Pancreas (tissue), 10 donors: ENCODE measurements at regions of chr1 and their contacts with region 1.

Region 1: DNA sequence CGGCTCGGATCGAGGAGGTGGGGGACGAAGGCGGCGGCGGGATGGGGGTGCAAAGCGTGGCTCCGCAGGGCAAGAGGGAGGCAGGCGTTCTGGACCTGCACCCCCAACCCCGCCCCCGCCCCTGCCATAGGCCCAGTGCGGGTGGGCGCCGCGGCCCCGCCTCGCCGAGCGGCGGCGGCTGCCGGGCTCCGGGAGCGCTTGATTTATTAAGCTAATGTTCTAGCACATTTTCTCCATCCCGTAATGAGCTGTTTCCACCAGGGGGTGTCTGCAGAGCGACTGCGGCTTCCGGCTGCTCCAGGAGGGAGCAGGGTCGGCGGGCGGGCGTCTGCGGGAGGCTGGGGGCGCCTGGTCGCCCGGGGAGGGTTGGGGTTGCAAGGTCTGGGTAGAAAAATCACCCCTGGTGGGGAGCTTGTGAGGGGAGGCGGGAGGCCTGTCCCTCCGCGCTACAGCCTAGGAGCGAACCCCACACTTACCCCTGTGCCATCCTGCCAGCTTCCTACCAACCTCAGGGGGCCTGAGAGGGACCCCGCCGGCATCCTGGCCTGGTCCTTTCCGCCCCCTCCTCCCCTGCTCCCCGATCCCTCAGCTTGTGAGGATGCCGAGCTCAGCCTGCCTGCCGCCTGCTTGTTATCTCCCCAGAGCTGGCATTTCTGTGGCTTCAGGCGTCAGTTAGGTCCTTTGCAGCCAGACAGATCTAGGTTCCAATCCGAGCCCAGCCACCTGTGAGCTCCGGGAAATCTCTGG is 48.5 kb upstream of the ACOT11 start:
- DNase-seq: peak in 4 of 6 donors; percentile 39 to 71 (median 57)
- ATAC-seq: peak; percentile 66 to 94 (median 88)
- H3K4me3 ChIP-seq: peak overlapping the region; percentile 14 to 53 (median 30)
- H3K27ac ChIP-seq: no peak overlapping the region
- H3K4me1 ChIP-seq: no peaks in the 10 kb centered on the region
- H3K27me3 ChIP-seq: no peaks in the 10 kb centered on the region
- CTCF ChIP-seq: peak in 3 of 4 donors; percentile 22 to 24 (median 23)

Region 2: DNA sequence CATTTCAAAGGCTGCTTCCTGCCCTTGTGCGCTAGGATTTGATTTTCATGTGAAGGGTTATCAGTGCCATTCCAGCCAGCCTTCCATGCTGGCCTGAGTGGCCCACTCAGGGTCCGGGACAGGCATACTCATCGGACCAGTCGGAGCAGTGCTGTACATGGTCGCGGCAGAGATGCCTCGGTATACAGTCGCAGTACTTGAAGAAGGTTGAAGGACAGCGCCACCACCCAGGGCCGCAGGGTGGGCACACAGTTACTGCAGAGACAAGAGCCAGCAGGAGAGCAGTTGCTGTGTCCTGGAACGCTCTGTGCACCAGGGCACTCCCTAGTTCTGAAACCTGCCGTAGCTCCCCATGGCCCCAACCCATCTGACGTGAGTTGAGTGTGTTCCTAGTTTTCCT is 490.7 kb before region 1 on chr1:
- intact Hi-C with region 1: no loop called
- DNase-seq: no peak
- ATAC-seq: no peak
- H3K4me3 ChIP-seq: no peak overlapping the region
- H3K27ac ChIP-seq: no peak overlapping the region
- H3K4me1 ChIP-seq: no peaks in the 10 kb centered on the region
- H3K27me3 ChIP-seq: no peaks in the 10 kb centered on the region
- CTCF ChIP-seq: no peak

Region 3: GRCh38 chr1:54070171-54070837 is 429.2 kb before region 1 on chr1:
- intact Hi-C with region 1: loop called in 1 of 3 experiments (anchors 10 kb)
- DNase-seq: no peak
- ATAC-seq: peak; percentile 63 to 99 (median 92)
- H3K4me3 ChIP-seq: no peak overlapping the region
- H3K27ac ChIP-seq: no peak overlapping the region
- H3K4me1 ChIP-seq: no peaks in the 10 kb centered on the region
- H3K27me3 ChIP-seq: no peaks in the 10 kb centered on the region
- CTCF ChIP-seq: peak; percentile 11 to 51 (median 42)

Region 4: GRCh38 chr1:54121482-54122134 is 377.9 kb before region 1 on chr1:
- intact Hi-C with region 1: loop called (anchors 5 to 10 kb)
- DNase-seq: peak; percentile 76 to 94 (median 85)
- ATAC-seq: peak; percentile 55 to 88 (median 78)
- H3K4me3 ChIP-seq: peak overlapping the region in 2 of 4 donors; percentile 10 to 33
- H3K27ac ChIP-seq: peak overlapping the region in 2 of 4 donors; percentile 39 to 44
- H3K4me1 ChIP-seq: peaks cover 4 to 33% (median 11%) of the 10 kb centered on the region in 3 donors
- H3K27me3 ChIP-seq: no peaks in the 10 kb centered on the region
- CTCF ChIP-seq: peak; percentile 62 to 83 (median 67)

Region 5: DNA sequence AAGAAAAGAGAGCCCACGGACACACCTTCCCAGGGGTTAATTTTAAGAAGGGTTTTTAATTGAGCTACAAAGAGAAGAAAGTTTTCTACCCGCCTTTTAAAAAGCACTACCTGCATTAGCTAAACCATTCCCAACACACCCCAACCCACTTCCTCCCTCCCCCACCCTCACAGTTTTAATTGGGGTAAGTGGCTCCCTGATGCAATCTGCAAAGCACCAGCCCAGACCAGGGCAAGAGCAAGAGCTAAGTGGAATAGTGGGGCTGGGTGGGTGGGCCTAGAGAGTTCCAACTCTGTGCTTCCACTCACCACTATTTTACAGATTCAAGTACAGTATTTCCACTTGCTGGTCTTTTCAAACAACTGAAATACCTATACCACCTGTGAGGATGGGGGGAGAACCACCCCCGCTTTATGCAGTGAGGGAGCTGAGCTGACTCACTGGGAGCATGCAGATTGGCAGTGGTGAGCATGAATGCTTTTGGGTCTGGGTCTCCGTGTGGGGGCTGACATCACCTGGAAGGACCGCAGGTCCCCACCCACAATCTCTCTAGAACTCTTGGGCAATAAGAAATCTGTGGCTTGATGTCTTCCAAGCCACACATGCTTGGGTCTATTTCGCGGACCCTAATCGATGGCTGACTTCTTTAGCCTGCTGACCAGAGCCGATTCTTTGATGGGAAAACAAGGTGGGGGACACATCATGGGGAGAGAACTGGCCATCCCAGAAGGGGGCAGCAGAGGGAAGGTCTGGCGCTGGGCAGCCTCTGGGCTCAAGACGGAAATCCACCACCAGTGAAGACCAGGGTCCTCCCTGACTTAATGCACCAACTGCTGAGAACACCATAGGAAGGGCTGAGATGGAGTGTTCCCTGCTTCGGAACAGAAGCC is 188.8 kb before region 1 on chr1:
- intact Hi-C with region 1: loop called in 1 of 3 experiments (anchors 10 kb)
- DNase-seq: peak in 4 of 6 donors; percentile 41 to 73 (median 49)
- ATAC-seq: peak in 3 of 4 donors; percentile 66 to 74 (median 68)
- H3K4me3 ChIP-seq: no peak overlapping the region
- H3K27ac ChIP-seq: no peak overlapping the region
- H3K4me1 ChIP-seq: peaks cover 0 to 11% (median 10%) of the 10 kb centered on the region in 3 donors
- H3K27me3 ChIP-seq: no peaks in the 10 kb centered on the region
- CTCF ChIP-seq: peak; percentile 11 to 41 (median 20)

Region 6: DNA sequence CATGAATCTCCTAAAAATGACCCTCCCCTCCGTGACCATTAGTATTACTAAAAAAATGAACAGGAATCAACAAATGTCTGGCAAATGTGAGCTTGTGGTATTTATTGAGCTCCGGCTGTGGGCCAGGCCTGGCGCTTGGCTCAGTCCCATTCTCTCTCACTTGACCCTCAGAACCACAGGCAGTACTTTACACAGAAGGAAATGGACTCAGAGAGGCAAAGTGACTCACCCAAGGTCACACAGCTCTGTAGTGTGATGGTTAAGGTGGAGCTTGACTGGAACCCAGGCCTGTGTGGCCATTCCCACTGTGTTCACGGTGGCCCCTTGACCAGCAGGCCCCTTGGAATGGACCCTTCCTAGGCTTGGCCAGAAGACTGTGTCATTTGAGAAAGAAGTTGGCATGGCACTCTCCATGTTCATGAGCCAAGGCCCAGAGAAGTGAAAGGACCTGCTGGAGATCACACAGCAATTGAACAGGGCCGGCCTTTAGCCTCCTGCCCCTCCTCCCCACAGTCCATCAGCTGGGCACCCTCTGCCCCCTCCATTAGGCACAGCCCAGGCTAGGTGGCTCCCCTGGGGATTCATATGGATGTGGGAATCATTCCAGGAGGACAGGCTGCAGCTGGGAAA is 91.7 kb after region 1 on chr1:
- intact Hi-C with region 1: no loop called
- DNase-seq: peak in 1 of 6 donors; percentile 22
- ATAC-seq: no peak
- H3K4me3 ChIP-seq: no peak overlapping the region
- H3K27ac ChIP-seq: no peak overlapping the region
- H3K4me1 ChIP-seq: no peaks in the 10 kb centered on the region
- H3K27me3 ChIP-seq: no peaks in the 10 kb centered on the region
- CTCF ChIP-seq: no peak

Region 7: DNA sequence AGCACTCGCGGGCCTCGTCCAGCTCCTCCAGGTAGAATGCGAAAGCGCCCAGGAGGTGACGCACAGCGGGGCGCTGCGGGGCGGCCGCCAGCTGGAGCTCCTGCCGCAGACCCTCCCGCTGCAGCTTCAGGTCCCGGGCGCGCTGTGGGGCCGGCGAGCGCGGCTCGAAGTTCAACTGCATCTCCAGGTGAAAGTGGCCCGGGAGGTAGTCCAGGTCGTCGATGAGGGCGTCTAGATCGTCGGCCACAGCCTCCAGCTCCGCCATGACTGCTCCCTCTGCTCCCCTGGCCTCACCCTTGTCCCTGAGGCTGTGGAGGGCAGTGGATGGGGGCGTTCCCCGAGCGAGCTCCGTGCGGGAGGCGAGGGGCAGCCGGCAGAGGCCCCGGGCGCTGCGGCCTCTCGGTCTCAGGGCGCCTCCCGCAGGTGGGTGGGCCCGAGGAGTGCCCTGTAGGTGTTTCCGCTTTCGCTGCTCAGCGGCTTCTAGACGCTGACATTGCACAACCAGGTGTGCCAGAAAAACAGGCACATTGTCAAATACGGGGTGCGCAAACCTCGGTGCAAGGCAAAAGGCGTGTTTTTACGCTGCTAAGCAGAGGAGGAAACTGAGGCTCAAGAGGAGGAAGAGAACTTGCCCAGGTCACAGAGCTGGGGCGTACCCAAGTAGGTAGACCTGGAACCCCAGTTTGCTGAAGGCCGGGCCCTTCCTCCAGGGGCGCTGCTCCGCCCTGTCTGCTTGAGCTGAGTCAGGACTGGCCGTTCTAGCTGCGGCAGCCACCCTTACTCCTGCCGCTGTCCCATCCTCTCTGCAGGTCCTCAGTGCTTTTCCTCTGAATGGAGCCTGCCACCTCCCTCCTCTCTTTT is 301.6 kb after region 1 on chr1 and contains the start of gene TTC22:
- intact Hi-C with region 1: loop called in 1 of 3 experiments (anchors 10 kb)
- DNase-seq: peak; percentile 73 to 90 (median 78)
- ATAC-seq: peak; percentile 89 to 94 (median 91)
- H3K4me3 ChIP-seq: peak within 1 kb of the TSS; percentile 47 to 68 (median 57)
- H3K27ac ChIP-seq: peak within 1 kb of the TSS; percentile 70 to 83 (median 75)
- H3K4me1 ChIP-seq: peaks cover 3 to 18% (median 6%) of the 10 kb centered on the region in 3 donors
- H3K27me3 ChIP-seq: no peaks in the 10 kb centered on the region
- CTCF ChIP-seq: peak; percentile 36 to 67 (median 46)
- total RNA-seq, gene TTC22: 6.7 to 10.6 (median 7.7) TPM

Region 8: DNA sequence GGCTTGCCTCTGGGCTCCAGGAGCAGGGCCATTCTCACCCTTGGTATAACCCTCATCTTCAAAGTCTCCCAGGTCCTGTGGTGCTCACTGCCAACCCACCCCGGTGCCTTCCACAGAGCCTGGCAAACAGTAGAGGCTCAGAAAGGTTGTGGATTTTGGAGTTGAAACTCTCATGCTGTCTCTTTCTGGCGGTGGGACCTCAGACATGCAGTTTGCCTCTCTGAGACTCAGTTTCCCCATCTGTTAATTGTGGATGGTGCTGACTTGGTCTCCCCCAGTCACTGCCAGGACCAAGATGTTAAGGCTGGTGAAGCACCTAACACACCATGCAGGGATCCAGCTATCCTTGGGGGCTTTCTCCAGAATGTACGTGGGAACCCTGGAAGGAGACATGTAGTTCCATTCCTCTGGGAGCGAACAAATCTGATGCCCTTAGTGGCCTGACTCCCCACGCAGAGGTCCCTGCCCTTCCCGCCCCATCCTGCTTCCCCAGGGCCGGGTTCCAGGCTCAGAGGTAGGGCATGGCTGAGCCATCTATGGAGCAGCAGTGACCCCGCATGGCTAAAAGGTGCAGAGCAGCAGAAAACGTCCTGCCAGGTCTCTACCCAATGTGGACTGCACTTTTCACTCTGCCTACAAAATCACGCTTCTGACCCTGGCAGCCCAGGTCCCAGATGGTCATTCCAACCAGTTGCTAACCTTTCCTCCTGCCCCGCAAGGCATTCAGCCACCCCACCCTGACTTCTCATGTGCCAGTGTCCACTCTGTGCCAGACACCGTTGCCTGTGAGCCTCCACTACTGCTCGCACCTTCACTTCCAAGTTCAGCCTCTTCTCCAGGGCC is 310.8 kb after region 1 on chr1:
- intact Hi-C with region 1: loop called in 2 of 3 experiments (anchors 10 kb)
- DNase-seq: peak in 5 of 6 donors; percentile 43 to 83 (median 68)
- ATAC-seq: peak; percentile 91 to 99 (median 97)
- H3K4me3 ChIP-seq: no peak overlapping the region
- H3K27ac ChIP-seq: no peak overlapping the region
- H3K4me1 ChIP-seq: no peaks in the 10 kb centered on the region
- H3K27me3 ChIP-seq: no peaks in the 10 kb centered on the region
- CTCF ChIP-seq: peak; percentile 28 to 70 (median 64)